GM12878 (cell line): ENCODE measurements at regions of chr1 and their contacts with region 1.

Region 1: DNA sequence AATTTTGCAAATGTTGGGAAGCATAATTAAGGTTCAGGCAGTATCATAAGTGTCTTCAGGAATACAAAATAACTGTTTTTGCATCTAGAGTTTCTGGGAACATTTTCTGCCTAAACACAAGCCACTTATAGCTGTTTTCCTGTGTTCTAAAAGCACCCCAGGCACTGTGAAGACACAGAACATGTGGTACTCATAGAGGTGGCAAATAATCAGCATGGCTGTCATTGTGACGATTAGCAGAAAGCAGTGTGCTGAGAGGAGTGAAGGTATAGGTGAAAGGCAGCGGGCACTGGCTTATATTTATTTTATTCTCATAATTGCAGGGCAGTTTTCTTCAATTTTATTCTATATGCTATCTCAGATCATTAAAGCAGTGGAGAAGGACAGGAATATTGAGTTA is 119.6 kb downstream of the LRRC53 start:
- DNase-seq: no peak
- ATAC-seq: no peak
- H3K4me3 ChIP-seq: no peak overlapping the region
- H3K27ac ChIP-seq: no peak overlapping the region
- H3K4me1 ChIP-seq: no peaks in the 10 kb centered on the region
- H3K27me3 ChIP-seq: no peaks in the 10 kb centered on the region
- CTCF ChIP-seq: no peak
- EP300 ChIP-seq: no peak
- POLR2A ChIP-seq: no peak
- RAD21 ChIP-seq: no peak

Region 2: GRCh38 chr1:74403606-74404005 is 10.8 kb after region 1 on chr1:
- CTCF ChIA-PET with region 1: interaction called, 4 read pairs
- POLR2A ChIA-PET with region 1: no interaction called
- RAD21 ChIA-PET with region 1: interaction called, 3 read pairs
- SMC1A ChIA-PET with region 1: interaction called, 12 read pairs
- in situ Hi-C with region 1: no loop called
- intact Hi-C with region 1: no loop called
- DNase-seq: no peak
- ATAC-seq: no peak
- H3K4me3 ChIP-seq: no peak overlapping the region
- H3K27ac ChIP-seq: no peak overlapping the region
- H3K4me1 ChIP-seq: no peaks in the 10 kb centered on the region
- H3K27me3 ChIP-seq: no peaks in the 10 kb centered on the region
- CTCF ChIP-seq: no peak
- EP300 ChIP-seq: no peak
- POLR2A ChIP-seq: no peak
- RAD21 ChIP-seq: no peak

Region 3: DNA sequence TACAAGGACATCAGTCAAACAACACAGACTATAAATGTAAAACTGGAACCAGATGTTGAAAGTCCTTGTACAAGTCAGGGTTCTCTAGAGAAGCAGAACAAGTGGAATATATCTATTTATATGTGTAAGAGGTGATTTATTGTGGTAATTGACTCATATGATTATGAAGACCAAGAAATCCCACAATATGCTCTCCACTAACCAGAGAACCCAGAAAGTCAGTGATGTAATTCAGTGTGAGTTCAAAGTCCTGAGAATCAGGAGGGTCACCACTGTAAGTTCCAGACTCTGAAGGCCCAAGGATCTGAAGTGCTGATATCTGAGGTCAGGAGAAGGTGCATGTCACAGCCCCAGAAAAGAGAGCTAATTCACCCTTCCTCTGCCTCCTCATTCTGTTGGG is 62.5 kb after region 1 on chr1:
- CTCF ChIA-PET with region 1: no interaction called
- POLR2A ChIA-PET with region 1: no interaction called
- RAD21 ChIA-PET with region 1: no interaction called
- SMC1A ChIA-PET with region 1: no interaction called
- in situ Hi-C with region 1: no loop called
- intact Hi-C with region 1: no loop called
- DNase-seq: no peak
- ATAC-seq: no peak
- H3K4me3 ChIP-seq: no peak overlapping the region
- H3K27ac ChIP-seq: no peak overlapping the region
- H3K4me1 ChIP-seq: no peaks in the 10 kb centered on the region
- H3K27me3 ChIP-seq: no peaks in the 10 kb centered on the region
- CTCF ChIP-seq: no peak
- EP300 ChIP-seq: no peak
- POLR2A ChIP-seq: no peak
- RAD21 ChIP-seq: no peak